ENCODE measurements at regions of chr3 and their contacts with region 1.

Region 1: GRCh38 chr3:134373994-134374790 is at the start of gene AMOTL2:
- DNase-seq: peak; percentile 93
- H3K4me3 Mint-ChIP-seq: peak within 1 kb of the TSS; percentile 93
- H3K27ac Mint-ChIP-seq: peak within 1 kb of the TSS; percentile 88
- H3K4me1 Mint-ChIP-seq: peaks cover 48% of the 10 kb centered on the region
- H3K27me3 Mint-ChIP-seq: no peaks in the 10 kb centered on the region
- CTCF ChIP-seq: no peak
- total RNA-seq, gene AMOTL2: 92.6 and 137 TPM in 2 replicates

Region 2: GRCh38 chr3:134326760-134327593 is 47.2 kb before region 1 on chr3:
- CTCF ChIA-PET with region 1: interaction called, 4 read pairs
- POLR2A ChIA-PET with region 1: interaction called, 55 read pairs
- intact Hi-C with region 1: no loop called
- DNase-seq: peak; percentile 96
- H3K4me3 Mint-ChIP-seq: peak overlapping the region; percentile 50
- H3K27ac Mint-ChIP-seq: peak overlapping the region; percentile 52
- H3K4me1 Mint-ChIP-seq: peaks cover 72% of the 10 kb centered on the region
- H3K27me3 Mint-ChIP-seq: no peaks in the 10 kb centered on the region
- CTCF ChIP-seq: no peak

Region 3: DNA sequence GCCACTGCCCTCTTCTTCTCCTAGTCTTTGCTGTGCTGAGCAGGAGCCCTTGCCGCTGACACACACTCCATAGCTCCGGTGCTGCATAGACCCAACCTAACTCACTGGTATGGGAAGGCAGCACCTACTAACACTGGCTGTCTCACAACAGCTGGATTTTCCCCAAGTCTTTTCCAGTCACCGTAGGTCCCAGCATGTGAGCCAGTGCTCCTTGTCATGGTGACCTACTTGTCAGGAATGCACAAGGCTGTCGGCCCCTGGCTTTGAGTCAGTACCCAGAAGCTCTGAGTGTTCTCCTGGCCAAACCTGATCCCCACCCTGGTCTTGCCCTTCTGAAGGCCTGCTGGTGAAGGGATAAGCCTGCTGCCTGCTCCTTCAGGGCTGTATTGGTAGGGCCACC is 25.7 kb before region 1 on chr3:
- CTCF ChIA-PET with region 1: interaction called, 5 read pairs
- POLR2A ChIA-PET with region 1: interaction called, 22 read pairs
- intact Hi-C with region 1: no loop called
- DNase-seq: peak; percentile 56
- H3K4me3 Mint-ChIP-seq: no peak overlapping the region
- H3K27ac Mint-ChIP-seq: peak overlapping the region; percentile 77
- H3K4me1 Mint-ChIP-seq: peaks cover 39% of the 10 kb centered on the region
- H3K27me3 Mint-ChIP-seq: no peaks in the 10 kb centered on the region
- CTCF ChIP-seq: no peak

Region 4: DNA sequence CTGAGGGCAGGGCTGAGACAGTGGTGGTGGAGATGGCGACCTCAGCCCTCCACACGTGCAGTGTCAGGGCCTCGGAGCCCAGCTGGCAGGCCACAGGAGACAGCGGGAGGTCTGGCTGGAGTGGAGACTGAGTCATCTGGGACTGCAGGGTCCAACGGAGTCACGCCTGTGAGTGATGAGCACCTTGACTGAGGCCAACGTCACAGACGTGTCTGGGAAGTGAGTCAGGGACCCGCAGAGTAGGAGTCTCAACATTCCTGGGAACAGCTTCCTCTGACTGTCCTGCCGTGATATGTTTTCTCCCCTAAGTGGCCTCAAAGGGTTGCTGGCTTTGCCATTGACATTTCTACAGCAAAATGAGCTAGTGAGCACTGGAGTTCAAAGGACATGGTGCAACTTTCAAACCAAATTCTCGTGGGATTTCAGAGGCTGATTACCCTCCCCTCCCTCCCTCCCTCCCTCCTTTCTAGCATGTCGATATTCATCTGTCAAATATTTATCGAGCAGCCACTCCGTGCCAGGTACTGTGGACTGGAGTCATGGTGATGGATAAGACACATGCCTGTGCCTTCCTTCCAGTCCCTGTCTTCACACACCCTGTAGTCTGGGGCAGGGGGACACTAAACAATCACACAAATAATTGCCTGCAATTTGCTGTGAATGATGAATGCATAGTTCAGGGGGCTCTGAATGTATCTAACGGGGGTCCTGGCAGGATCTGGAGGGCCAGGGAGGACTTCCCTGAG is 53.4 kb after region 1 on chr3:
- CTCF ChIA-PET with region 1: interaction called, 3 read pairs
- POLR2A ChIA-PET with region 1: interaction called, 3 read pairs
- intact Hi-C with region 1: loop called (anchors 5 kb)
- DNase-seq: peak; percentile 96
- H3K4me3 Mint-ChIP-seq: no peak overlapping the region
- H3K27ac Mint-ChIP-seq: peak overlapping the region; percentile 84
- H3K4me1 Mint-ChIP-seq: peaks cover 11% of the 10 kb centered on the region
- H3K27me3 Mint-ChIP-seq: no peaks in the 10 kb centered on the region
- CTCF ChIP-seq: no peak

Region 5: DNA sequence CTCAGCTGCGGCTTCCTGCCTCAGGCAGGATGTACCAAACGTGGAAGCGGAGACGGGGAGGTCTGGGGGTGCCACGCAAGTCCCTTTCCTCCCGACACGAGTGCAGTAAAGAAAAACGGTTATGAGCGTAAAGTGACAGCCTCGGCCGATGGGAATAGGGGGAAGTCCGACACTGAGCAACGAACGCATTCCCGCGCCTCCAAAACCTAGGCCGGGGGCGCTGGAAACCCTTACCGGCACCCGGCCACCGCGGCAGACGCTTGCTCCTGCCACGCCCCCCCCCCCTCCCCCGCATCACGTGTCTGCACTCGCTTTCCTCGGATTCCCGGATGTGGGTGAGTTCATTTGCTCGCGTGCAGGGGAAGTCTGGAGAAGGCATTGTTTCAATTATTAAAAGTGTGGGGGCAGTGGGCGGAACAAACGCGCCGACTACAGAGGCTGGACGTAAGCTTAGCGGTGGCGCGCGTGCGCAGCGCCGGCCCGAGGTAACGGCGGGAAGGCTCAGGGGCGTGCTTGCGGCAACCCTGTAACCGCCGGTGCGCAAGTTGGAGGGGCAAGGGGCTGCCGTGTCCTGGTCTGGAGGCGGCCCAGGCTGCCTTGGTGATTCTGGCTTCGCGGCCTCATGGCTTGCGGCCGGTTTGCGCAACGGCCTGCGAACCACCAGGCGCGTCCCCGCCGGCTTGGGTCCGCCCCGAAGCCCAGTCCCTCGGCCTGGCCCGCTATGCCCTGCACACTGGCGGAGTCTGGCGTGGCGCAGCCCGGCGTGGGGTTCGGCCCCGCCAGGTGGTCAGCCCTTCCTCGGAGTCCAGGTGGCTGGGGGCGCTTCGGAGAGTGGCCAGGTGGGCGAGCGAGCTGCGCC is 111.8 kb after region 1 on chr3 and contains the starts of genes ANAPC13 and CEP63:
- CTCF ChIA-PET with region 1: interaction called, 449 read pairs
- POLR2A ChIA-PET with region 1: interaction called, 59 read pairs
- intact Hi-C with region 1: no loop called
- DNase-seq: peak; percentile 98
- H3K4me3 Mint-ChIP-seq: peak within 1 kb of the TSS; percentile 75
- H3K27ac Mint-ChIP-seq: peak within 1 kb of the TSS; percentile 87
- H3K4me1 Mint-ChIP-seq: peaks cover 31% of the 10 kb centered on the region
- H3K27me3 Mint-ChIP-seq: no peaks in the 10 kb centered on the region
- CTCF ChIP-seq: no peak
- total RNA-seq, gene ANAPC13: 61.5 and 78.4 TPM in 2 replicates
- total RNA-seq, gene CEP63: 37.0 and 40.0 TPM in 2 replicates

Region 6: DNA sequence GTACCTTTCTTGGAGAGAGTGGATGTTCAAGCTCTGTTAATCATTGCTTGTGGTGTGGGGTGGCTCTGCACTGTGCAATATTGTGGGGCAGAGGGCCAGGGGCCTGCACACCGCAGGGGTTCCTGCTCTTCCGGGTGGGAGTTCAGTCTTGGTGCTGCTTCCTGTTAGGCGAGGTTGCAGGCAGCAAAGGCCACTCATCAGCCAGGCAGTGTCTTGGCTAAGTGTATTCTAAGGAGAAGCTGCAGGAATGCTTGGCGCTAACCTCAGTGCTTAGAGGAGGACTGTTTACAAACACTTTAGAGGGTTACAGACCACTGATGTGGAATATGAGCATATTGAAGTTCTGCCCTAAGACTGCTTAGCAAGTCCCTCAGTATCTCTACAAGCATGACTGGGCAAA is 193.4 kb after region 1 on chr3:
- CTCF ChIA-PET with region 1: no interaction called
- POLR2A ChIA-PET with region 1: no interaction called
- intact Hi-C with region 1: no loop called
- DNase-seq: no peak
- H3K4me3 Mint-ChIP-seq: no peak overlapping the region
- H3K27ac Mint-ChIP-seq: no peak overlapping the region
- H3K4me1 Mint-ChIP-seq: no peaks in the 10 kb centered on the region
- H3K27me3 Mint-ChIP-seq: no peaks in the 10 kb centered on the region
- CTCF ChIP-seq: no peak

Measured in MCF 10A (cell line).